GM23248 (cell line): ENCODE measurements at regions of chr4 and their contacts with region 1.

Region 1: DNA sequence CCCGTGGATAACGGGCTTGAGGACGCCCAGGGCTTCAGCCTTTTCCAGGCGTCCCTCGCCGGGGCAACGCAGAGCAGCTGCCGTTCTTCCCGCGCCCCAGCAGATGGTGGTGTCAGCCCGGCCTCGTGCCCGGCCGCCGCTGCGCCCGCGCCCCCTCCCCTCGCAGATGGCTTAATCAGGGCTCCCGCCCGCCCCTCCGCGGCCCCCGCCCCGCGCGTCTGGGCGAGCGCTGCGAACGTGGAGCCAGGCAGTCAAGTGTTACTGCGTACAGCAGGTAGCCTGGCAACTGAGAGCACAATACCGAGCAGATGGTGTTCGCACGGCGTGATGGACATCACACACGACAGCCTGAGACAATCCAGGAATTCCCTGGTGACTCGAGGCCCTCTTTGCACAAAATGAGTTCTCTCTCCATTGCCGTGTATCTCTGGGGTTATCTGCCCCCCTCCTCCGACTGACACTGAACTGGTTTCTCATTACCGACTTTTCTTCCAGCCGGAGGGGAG is 69.3 kb downstream of the MGST2 start:
- DNase-seq: peak; percentile 87
- H3K4me3 ChIP-seq: peak overlapping the region; percentile 79
- H3K27ac ChIP-seq: peak overlapping the region; percentile 23; the same call in 1 of the 2 replicates
- H3K4me1 ChIP-seq: peaks cover 7% of the 10 kb centered on the region; the same call in 1 of the 2 replicates
- H3K27me3 ChIP-seq: no peaks in the 10 kb centered on the region

Region 2: GRCh38 chr4:140012688-140013486 is 278.0 kb after region 1 on chr4:
- in situ Hi-C with region 1: no loop called
- DNase-seq: peak; percentile 65
- H3K4me3 ChIP-seq: no peak overlapping the region
- H3K27ac ChIP-seq: no peak overlapping the region
- H3K4me1 ChIP-seq: peaks cover 8% of the 10 kb centered on the region; the same call in 1 of the 2 replicates
- H3K27me3 ChIP-seq: no peaks in the 10 kb centered on the region

Region 3: DNA sequence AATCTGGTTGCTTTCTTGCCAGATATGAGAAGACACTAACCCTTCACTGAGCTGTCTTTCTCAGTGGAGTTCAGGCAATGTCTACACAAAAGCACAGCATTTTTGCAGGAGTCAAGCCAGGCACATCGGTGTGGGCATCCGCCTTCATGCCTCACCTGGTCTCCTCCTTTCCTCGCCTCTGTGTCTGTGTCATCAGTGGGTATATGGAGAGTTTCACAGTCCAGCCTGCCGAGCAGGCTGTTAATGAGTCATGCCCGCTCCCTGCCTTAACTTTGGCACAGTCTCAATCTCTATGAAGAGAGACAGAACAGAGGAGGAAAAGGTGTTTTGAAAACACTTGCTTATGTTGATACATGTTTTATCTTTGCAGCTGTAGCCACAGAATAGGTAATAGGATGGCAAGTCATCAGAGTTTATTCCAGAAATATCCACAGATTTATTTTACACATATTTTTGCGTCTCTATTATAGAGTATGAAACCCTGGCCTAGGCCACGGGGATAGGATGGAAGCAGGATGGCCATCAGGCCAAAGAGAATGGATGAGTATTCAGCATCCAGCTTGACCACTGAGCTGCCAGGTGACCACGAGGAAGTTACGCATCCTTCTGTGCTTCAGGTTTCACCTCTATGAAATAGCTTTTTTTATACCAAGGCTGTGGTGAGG is 451.9 kb after region 1 on chr4:
- in situ Hi-C with region 1: no loop called
- DNase-seq: peak; percentile 87
- H3K4me3 ChIP-seq: no peak overlapping the region
- H3K27ac ChIP-seq: no peak overlapping the region
- H3K4me1 ChIP-seq: 0 out of 2 replicates have a peak, but pooled peaks cover 8% of the 10 kb centered on the region
- H3K27me3 ChIP-seq: no peaks in the 10 kb centered on the region

Region 4: GRCh38 chr4:140252742-140253555 is 518.0 kb after region 1 on chr4:
- in situ Hi-C with region 1: loop called (anchors 25 kb)
- DNase-seq: peak; percentile 76
- H3K4me3 ChIP-seq: peak overlapping the region; percentile 67
- H3K27ac ChIP-seq: peak overlapping the region; percentile 12
- H3K4me1 ChIP-seq: peaks cover 39% of the 10 kb centered on the region
- H3K27me3 ChIP-seq: no peaks in the 10 kb centered on the region